B cell (primary cell): ENCODE measurements at regions of chr3 and their contacts with region 1.

Region 1: DNA sequence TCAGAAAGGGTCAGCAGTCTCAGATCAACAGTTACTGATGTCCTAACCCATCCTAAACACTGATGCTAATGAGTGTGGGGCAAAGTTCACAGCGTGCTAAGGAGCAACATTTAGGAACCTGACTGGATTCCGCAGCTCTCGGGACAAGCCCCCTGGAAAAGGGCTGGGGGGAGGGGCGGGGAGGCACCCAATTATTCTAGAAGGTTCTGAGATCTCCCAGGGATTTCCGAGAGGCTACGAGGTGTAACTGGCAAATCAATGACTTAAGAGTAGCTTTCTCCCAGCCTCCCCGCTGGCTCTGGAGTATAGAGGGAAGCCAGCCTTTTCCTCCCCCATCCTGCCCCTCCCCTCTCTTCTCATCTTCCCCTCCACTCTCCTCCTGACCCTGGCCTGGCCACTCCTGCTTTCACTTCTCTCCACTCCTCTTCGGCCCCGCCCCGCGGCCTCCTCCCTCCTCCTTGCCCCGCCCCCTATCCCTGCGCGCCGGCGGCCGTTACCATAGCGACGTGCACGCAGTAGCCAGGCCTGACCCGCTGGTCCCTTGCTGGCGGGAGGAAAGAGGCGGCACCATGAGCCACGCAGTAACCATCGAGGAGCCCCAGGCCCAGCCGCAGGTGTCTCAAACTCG is at the start of gene CFAP91:
- DNase-seq: peak; percentile 93
- ATAC-seq: peak; percentile 95
- H3K4me3 ChIP-seq: peak within 1 kb of the TSS in 4 of 5 experiments; percentile 47 to 67 (median 62)
- H3K4me3 Mint-ChIP-seq: peak within 1 kb of the TSS; percentile 88
- H3K27ac ChIP-seq: peak within 1 kb of the TSS in 1 of 2 donors; percentile 37
- H3K27ac Mint-ChIP-seq: peak within 1 kb of the TSS; percentile 82
- H3K4me1 ChIP-seq: peaks cover 25 to 32% of the 10 kb centered on the region in 2 donors
- H3K4me1 Mint-ChIP-seq: peaks cover 39% of the 10 kb centered on the region
- H3K27me3 ChIP-seq: no peaks in the 10 kb centered on the region
- H3K27me3 Mint-ChIP-seq: no peaks in the 10 kb centered on the region
- CTCF ChIP-seq: no peak
- total RNA-seq, gene CFAP91: 6.4 and 7.2 TPM in 2 replicates

Region 2: GRCh38 chr3:119293871-119294695 is 408.6 kb before region 1 on chr3 and contains the start of gene ARHGAP31:
- CTCF ChIA-PET with region 1: no interaction called
- POLR2A ChIA-PET with region 1: no interaction called
- intact Hi-C with region 1: loop called (anchors 1 kb)
- DNase-seq: peak; percentile 89
- ATAC-seq: peak; percentile 76
- H3K4me3 ChIP-seq: peak within 1 kb of the TSS; percentile 61 to 89 (median 80)
- H3K4me3 Mint-ChIP-seq: peak within 1 kb of the TSS; percentile 87
- H3K27ac ChIP-seq: peak within 1 kb of the TSS; percentile 91 to 96
- H3K27ac Mint-ChIP-seq: peak within 1 kb of the TSS; percentile 91
- H3K4me1 ChIP-seq: peaks cover 30 to 46% of the 10 kb centered on the region in 2 donors
- H3K4me1 Mint-ChIP-seq: peaks cover 58% of the 10 kb centered on the region
- H3K27me3 ChIP-seq: peaks cover 0 to 7% (median 0%) of the 10 kb centered on the region in 4 experiments
- H3K27me3 Mint-ChIP-seq: no peaks in the 10 kb centered on the region
- CTCF ChIP-seq: no peak
- total RNA-seq, gene ARHGAP31: 7.8 and 8.3 TPM in 2 replicates

Region 3: DNA sequence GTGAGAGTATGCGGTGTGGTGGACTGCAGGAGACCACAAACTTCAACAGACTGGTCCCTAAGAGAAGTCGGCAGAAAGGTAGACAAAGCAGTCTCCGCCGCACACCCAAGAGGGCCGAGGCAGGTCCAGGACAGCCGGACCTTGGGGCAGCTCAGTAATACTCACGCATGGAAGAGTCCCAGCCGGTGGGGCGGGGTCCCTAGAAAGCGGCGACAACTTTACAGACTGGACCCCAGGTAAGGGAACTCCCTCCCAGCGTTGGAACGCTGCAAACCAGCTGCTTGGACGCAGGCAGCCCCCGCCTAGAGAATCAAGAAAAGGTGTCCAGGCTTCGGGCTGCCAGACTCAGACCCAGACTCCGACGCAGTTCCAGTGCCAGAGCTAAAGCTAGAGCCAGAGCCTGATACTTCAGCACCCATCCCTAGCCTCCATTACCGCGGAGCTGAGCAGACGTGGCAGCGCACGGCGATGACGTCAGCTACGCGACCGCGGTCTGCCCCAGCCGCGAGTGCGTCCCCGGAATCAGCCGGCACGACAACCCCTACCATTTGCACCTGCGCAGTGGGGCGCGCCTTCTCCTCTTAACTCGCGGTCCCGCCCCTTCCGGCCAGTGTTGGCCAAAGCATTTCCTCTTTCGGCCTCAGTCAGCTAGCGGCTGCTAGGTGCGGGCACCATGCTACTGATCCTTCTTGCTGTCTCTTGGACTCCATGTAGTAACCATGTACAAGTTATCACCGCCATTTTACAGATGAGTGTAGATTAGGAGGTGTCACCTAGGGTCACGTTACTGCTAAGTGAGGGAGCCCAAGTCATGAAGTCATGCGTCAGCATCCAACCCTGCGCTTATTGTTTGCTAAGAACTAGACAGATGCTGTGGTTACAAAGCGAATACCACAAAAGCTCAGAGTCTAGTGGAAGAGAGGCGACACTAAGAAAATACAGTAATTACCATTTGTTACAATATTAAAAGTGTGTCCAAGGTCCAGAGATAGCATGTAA is 239.2 kb before region 1 on chr3 and contains the start of gene TMEM39A:
- CTCF ChIA-PET with region 1: no interaction called
- POLR2A ChIA-PET with region 1: no interaction called
- intact Hi-C with region 1: loop called (anchors 2 kb)
- DNase-seq: peak; percentile 99
- ATAC-seq: peak; percentile 87
- H3K4me3 ChIP-seq: peak within 1 kb of the TSS; percentile 76 to 99 (median 85)
- H3K4me3 Mint-ChIP-seq: peak within 1 kb of the TSS; percentile 96
- H3K27ac ChIP-seq: peak within 1 kb of the TSS; percentile 68 to 88
- H3K27ac Mint-ChIP-seq: peak within 1 kb of the TSS; percentile 99
- H3K4me1 ChIP-seq: peaks cover 24 to 25% of the 10 kb centered on the region in 2 donors
- H3K4me1 Mint-ChIP-seq: peaks cover 37% of the 10 kb centered on the region
- H3K27me3 ChIP-seq: no peaks in the 10 kb centered on the region
- H3K27me3 Mint-ChIP-seq: no peaks in the 10 kb centered on the region
- CTCF ChIP-seq: no peak
- total RNA-seq, gene TMEM39A: 39.9 and 50.3 TPM in 2 replicates

Region 4: DNA sequence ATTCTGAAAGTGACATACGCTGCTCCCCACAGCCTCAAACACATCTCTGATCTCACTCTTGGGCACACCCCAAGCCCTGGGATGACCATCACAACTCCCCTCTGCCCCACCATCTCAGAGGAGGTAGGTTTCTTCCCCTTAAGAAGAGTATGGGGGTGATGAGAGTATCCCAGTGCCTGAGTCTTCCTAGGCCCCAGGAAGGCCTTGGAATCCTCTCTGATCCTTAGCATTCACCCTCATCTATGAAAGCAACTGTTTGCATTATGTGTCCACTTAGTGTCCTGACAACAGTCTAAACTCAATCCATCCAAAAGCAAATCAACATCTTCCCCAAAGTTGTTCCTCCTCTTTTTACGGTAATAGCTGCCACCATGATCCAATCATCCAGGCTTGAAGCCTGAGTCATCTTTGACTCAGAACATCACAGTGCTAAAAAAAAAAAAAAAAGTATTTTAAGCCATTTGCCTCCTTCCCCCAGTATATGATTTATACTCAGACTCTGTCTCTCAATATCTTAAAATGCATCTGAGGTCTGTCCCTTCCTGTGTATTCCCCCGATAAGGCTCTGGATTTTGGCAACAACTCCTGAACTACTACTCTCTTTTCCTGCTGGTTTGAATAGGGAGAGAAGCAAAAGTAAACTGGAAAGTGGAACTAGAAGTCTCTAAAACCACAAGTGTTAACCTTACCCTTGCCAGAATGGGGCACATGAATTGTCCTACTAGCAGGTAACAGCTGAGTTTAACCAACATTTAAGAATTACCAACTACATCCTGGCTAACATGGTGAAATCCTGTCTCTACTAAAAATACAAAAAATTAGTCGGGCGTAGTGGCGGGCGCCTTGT is 64.7 kb before region 1 on chr3:
- CTCF ChIA-PET with region 1: no interaction called
- POLR2A ChIA-PET with region 1: no interaction called
- intact Hi-C with region 1: loop called (anchors 1 kb)
- DNase-seq: peak; percentile 65
- ATAC-seq: peak; percentile 60
- H3K4me3 ChIP-seq: peak overlapping the region in 2 of 5 experiments; percentile 29 to 30
- H3K4me3 Mint-ChIP-seq: peak overlapping the region; percentile 85
- H3K27ac ChIP-seq: peak overlapping the region in 1 of 2 donors; percentile 65
- H3K27ac Mint-ChIP-seq: peak overlapping the region; percentile 97
- H3K4me1 ChIP-seq: peaks cover 16 to 20% of the 10 kb centered on the region in 2 donors
- H3K4me1 Mint-ChIP-seq: peaks cover 24% of the 10 kb centered on the region
- H3K27me3 ChIP-seq: no peaks in the 10 kb centered on the region
- H3K27me3 Mint-ChIP-seq: no peaks in the 10 kb centered on the region
- CTCF ChIP-seq: no peak

Region 5: GRCh38 chr3:119690043-119690656 is 12.5 kb before region 1 on chr3:
- CTCF ChIA-PET with region 1: interaction called, 10 read pairs
- POLR2A ChIA-PET with region 1: no interaction called
- intact Hi-C with region 1: no loop called
- DNase-seq: no peak
- ATAC-seq: no peak
- H3K4me3 ChIP-seq: no peak overlapping the region
- H3K4me3 Mint-ChIP-seq: no peak overlapping the region
- H3K27ac ChIP-seq: no peak overlapping the region
- H3K27ac Mint-ChIP-seq: no peak overlapping the region
- H3K4me1 ChIP-seq: no peaks in the 10 kb centered on the region
- H3K4me1 Mint-ChIP-seq: no peaks in the 10 kb centered on the region
- H3K27me3 ChIP-seq: no peaks in the 10 kb centered on the region
- H3K27me3 Mint-ChIP-seq: no peaks in the 10 kb centered on the region
- CTCF ChIP-seq: peak; percentile 71

Region 6: DNA sequence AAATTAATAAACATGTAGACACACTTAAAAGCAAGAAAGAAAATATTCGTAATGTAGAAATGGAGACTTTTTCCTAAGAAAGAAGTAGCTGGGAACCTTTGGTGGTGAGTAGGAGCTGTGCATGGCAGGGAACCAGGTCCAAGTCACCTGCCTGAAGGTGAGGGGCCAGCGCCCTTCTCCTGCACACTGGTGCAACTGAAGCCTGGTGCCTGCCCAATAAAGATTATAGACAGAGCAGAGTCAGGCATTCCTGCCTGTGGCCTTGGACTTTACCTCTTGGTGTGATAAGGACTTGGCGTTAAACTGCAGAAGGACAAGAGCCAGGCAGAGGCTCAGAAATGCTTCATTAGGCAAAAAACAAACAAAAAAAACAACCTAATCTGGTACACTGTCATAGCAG is 14.4 kb after region 1 on chr3:
- CTCF ChIA-PET with region 1: no interaction called
- POLR2A ChIA-PET with region 1: no interaction called
- intact Hi-C with region 1: no loop called
- DNase-seq: no peak
- ATAC-seq: no peak
- H3K4me3 ChIP-seq: no peak overlapping the region
- H3K4me3 Mint-ChIP-seq: no peak overlapping the region
- H3K27ac ChIP-seq: no peak overlapping the region
- H3K27ac Mint-ChIP-seq: no peak overlapping the region
- H3K4me1 ChIP-seq: no peaks in the 10 kb centered on the region
- H3K4me1 Mint-ChIP-seq: no peaks in the 10 kb centered on the region
- H3K27me3 ChIP-seq: peaks cover 0 to 2% (median 0%) of the 10 kb centered on the region in 4 experiments
- H3K27me3 Mint-ChIP-seq: no peaks in the 10 kb centered on the region
- CTCF ChIP-seq: no peak

Region 7: DNA sequence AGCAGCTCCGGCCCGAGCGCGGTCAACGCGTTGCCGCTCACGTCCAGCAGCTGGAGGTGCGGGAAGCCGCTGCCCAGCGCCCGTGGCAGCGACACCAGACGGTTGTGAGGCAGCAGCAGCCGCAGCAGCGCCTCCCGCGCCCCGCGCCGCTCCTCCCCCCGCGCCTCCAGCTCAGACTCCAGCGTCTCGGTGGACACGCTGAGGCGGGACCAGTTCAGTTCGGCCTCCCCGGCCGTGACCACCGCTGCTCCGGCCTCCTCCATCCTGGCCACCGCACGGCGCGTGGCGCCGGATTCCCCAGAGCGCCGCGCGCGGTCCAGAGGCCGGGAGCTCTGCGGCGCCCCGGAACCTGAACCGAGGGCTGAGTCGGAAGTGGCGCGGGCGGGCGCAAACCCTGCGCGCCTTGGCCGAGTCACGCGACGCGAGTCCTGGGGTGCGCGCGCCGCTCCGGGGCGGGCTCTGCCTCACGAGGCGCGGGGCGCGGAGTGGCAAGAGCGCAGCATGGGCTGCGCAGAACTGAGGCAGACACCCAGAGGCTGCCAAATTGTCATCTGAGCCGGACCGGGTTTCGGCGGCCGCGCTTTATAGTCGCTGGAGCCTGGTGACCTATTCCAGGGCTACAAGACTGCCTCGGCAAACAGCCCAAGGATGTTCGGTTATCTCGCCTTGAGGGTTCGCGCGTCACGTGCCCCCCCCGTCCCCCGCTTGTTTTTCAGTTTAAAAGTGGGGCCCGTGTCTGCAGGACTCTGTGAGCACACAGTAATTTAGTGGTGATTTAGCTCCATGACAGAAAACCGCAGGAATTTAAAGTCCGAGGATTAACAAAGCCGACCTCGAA is 646.6 kb after region 1 on chr3 and contains the start of gene LRRC58:
- CTCF ChIA-PET with region 1: no interaction called
- POLR2A ChIA-PET with region 1: no interaction called
- intact Hi-C with region 1: loop called (anchors 5 kb)
- DNase-seq: peak; percentile 95
- ATAC-seq: peak; percentile 89
- H3K4me3 ChIP-seq: peak within 1 kb of the TSS; percentile 61 to 99 (median 88)
- H3K4me3 Mint-ChIP-seq: peak within 1 kb of the TSS; percentile 95
- H3K27ac ChIP-seq: peak within 1 kb of the TSS; percentile 63 to 85
- H3K27ac Mint-ChIP-seq: peak within 1 kb of the TSS; percentile 94
- H3K4me1 ChIP-seq: peaks cover 14 to 17% of the 10 kb centered on the region in 2 donors
- H3K4me1 Mint-ChIP-seq: peaks cover 41% of the 10 kb centered on the region
- H3K27me3 ChIP-seq: peaks cover 0 to 10% (median 0%) of the 10 kb centered on the region in 4 experiments
- H3K27me3 Mint-ChIP-seq: no peaks in the 10 kb centered on the region
- CTCF ChIP-seq: peak; percentile 25
- total RNA-seq, gene LRRC58: 16.7 TPM in 2 replicates

Region 8: DNA sequence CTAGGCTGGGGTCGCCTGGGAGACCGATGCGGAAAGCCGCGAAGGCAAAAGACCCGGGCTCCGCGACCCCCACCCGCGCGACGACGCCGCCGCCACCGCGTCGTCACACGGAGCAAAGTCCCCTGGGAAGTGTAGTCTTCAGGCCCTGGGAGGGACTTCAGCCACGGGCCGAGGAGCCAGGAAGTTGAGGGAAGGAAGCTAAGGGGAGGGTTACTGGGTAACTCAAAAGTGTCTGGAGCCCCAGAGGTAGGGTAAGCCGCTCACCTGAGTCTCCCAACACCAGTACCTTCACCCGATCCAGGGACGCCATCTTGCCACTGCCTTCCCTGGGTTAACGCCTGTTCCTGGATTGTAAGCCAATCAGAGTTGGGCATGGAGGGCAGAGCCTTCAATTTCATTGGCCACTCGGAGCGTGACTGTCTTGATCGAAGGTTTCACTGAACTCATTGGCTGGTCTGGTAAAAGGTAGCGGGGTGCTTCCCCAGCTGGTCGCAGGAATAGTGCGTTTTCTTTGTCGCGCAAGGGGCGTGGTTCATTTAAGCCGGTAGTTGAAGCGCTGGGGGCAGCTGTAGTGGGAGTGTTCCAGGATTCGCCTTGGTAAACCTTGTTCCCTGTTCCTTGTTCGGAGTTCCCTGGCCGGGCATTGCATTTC is 1039.7 kb after region 1 on chr3 and contains the starts of genes GTF2E1 and RABL3:
- CTCF ChIA-PET with region 1: no interaction called
- POLR2A ChIA-PET with region 1: no interaction called
- intact Hi-C with region 1: loop called (anchors 5 kb)
- DNase-seq: peak; percentile 98
- ATAC-seq: peak; percentile 96
- H3K4me3 ChIP-seq: peak within 1 kb of the TSS; percentile 78 to 98 (median 94)
- H3K4me3 Mint-ChIP-seq: peak within 1 kb of the TSS; percentile 95
- H3K27ac ChIP-seq: peak within 1 kb of the TSS; percentile 99 to 100
- H3K27ac Mint-ChIP-seq: peak within 1 kb of the TSS; percentile 96
- H3K4me1 ChIP-seq: peaks cover 12 to 15% of the 10 kb centered on the region in 2 donors
- H3K4me1 Mint-ChIP-seq: peaks cover 29% of the 10 kb centered on the region
- H3K27me3 ChIP-seq: no peaks in the 10 kb centered on the region
- H3K27me3 Mint-ChIP-seq: no peaks in the 10 kb centered on the region
- CTCF ChIP-seq: no peak
- total RNA-seq, gene GTF2E1: 23.0 and 24.7 TPM in 2 replicates
- total RNA-seq, gene RABL3: 18.8 and 19.5 TPM in 2 replicates